RWPE1 (cell line): ENCODE measurements at regions of chr2 and their contacts with region 1.

Region 1: DNA sequence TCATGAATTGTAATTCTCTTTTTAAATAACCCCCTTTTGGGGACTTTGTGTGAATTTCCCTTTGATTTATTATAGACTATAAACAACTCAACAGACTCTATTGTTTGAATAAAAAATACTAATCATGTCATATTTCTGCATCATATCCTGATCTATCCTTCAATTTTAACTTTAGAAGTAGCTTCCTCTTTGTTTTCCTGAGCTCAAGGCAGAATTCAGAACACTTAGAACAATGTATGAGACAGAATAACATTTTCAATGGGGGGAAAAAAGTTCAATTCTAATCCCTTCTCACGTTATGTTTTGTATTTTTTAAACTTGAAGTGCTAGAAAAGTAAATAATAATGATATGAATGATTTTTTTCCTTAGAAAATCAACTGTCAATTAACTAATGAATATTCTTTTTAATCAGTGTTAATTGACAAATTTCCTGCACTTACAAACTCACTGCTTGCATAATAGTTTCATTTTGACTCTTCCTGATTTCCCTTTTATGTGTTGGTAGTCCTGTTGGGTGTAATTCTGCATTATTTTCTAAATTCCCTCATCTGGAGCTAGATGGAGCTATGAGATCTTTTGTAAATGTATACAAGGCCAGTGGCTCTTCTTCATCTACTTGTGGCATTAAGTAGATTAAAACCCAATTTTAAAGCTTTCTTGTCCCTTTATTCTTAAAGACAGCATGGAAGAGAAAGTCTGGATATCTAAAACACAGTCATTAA is 326.1 kb downstream of the PARD3B start:
- DNase-seq: peak; percentile 12
- H3K27ac ChIP-seq: no peak overlapping the region
- CTCF ChIP-seq: no peak

Region 2: DNA sequence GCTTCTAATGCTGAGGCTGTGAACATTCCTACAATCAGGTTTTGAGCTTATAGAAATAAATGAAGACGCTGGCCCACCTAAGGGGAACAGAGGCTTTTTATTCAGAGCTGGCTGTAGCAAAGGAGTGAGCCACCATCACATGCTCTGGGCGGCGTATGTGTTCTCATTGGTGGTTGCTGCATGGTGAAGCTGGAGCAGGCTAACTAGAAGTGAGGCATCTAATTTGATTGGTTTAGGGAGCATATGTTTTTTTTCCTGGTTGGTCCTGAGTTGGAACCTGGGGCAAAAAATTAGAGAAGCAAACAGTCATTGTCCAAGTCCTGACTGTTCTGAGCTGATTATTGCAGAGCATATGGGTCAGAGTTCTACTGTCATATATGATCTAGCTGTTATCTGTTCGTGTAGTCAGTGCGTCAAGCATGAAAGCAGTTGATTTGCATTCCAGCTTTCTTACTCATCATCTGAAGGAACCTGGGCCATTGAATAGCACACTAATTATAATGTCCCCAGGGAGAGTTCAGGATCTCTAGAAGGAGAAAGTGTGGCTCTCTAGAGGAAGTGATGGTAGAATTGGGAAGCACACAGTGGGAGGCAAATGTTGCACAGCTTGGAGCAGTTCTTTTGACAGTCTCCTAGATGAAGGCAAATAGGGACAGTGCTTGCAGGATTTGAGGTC is 46.5 kb before region 1 on chr2:
- CTCF ChIA-PET with region 1: no interaction called
- POLR2A ChIA-PET with region 1: no interaction called
- DNase-seq: no peak
- H3K27ac ChIP-seq: no peak overlapping the region
- CTCF ChIP-seq: no peak

Region 3: GRCh38 chr2:204840504-204840903 is 30.9 kb before region 1 on chr2:
- CTCF ChIA-PET with region 1: no interaction called
- POLR2A ChIA-PET with region 1: no interaction called
- DNase-seq: no peak
- H3K27ac ChIP-seq: no peak overlapping the region
- CTCF ChIP-seq: no peak

Region 4: DNA sequence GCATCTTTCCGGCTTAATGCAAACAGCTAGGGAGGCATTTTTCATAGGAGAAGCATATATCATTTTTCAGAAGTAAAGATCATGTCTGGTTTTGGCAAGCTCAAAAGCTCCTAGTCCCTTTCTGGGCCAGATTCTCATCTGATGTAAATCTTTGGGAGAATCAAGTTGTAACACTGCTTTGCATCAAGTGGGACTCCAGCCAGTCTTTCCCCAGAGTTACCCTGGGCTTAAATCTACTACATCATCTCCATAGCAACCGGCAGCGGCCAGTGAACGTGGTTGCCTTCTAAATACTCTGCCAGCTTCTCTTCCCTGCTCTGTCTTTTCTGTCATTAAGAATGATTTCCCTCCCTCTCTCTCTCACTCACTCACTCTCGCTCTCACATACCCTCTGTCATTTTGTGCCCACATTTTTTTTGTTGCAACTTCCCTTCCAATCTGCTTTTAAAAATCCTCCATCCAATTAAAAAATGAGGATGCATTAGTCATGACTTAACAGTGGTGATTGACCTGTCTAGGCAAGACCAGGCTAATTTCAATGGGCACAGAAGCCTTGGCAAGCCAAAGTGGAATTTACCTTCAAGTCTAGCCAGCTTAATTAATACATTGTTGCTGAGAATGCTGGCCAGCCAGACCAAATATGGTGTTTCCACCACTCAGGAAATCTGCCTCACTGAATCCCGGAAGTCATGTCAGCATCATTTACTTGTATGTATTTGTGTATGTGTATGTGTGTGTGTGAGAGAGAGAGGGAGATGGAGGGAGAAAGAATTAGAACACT is 903.9 kb after region 1 on chr2:
- CTCF ChIA-PET with region 1: interaction called, 10 read pairs
- POLR2A ChIA-PET with region 1: no interaction called
- DNase-seq: peak; percentile 82
- H3K27ac ChIP-seq: peak overlapping the region; percentile 93
- CTCF ChIP-seq: no peak